ENCODE measurements at regions of chr3 and their contacts with region 1.

Region 1: GRCh38 chr3:105774444-105775180 is 94.2 kb downstream of the CBLB start:
- DNase-seq: no peak
- ATAC-seq: no peak
- H3K4me3 ChIP-seq: no peak overlapping the region
- H3K4me3 Mint-ChIP-seq: no peak overlapping the region
- H3K27ac ChIP-seq: peak overlapping the region in 1 of 2 experiments; percentile 22
- H3K27ac Mint-ChIP-seq: peak overlapping the region; percentile 70
- H3K4me1 ChIP-seq: peaks cover 41% of the 10 kb centered on the region
- H3K4me1 Mint-ChIP-seq: peaks cover 83% of the 10 kb centered on the region
- H3K27me3 ChIP-seq: no peaks in the 10 kb centered on the region
- H3K27me3 Mint-ChIP-seq: no peaks in the 10 kb centered on the region
- CTCF ChIP-seq: no peak

Region 2: GRCh38 chr3:105394177-105394576 is 380.4 kb before region 1 on chr3:
- CTCF ChIA-PET with region 1: no interaction called
- POLR2A ChIA-PET with region 1: no interaction called
- intact Hi-C with region 1: no loop called
- DNase-seq: no peak
- ATAC-seq: no peak
- H3K4me3 ChIP-seq: no peak overlapping the region
- H3K4me3 Mint-ChIP-seq: no peak overlapping the region
- H3K27ac ChIP-seq: no peak overlapping the region
- H3K27ac Mint-ChIP-seq: no peak overlapping the region
- H3K4me1 ChIP-seq: no peaks in the 10 kb centered on the region
- H3K4me1 Mint-ChIP-seq: no peaks in the 10 kb centered on the region
- H3K27me3 ChIP-seq: no peaks in the 10 kb centered on the region
- H3K27me3 Mint-ChIP-seq: peaks cover 3% of the 10 kb centered on the region
- CTCF ChIP-seq: no peak

Region 3: DNA sequence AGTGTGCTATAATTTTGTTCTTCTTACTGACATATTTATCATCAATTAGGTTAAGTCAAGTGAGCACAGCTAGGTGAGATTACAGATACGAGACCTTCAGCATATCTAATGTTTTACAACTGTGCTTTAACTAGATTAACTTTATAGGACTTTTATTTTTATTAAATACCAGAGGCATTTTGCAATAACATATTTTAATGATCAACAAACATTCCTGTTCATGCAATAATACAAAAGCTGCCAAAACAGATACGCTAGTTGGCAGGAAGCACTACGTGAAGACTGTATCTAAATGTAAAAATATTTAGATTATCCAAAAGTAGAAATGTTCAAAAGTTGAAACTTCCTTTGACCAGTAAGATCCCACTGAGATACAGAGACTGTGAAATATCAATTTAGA is 44.9 kb before region 1 on chr3:
- CTCF ChIA-PET with region 1: no interaction called
- POLR2A ChIA-PET with region 1: no interaction called
- intact Hi-C with region 1: loop called (anchors 5 kb)
- DNase-seq: no peak
- ATAC-seq: no peak
- H3K4me3 ChIP-seq: no peak overlapping the region
- H3K4me3 Mint-ChIP-seq: no peak overlapping the region
- H3K27ac ChIP-seq: no peak overlapping the region
- H3K27ac Mint-ChIP-seq: no peak overlapping the region
- H3K4me1 ChIP-seq: no peaks in the 10 kb centered on the region
- H3K4me1 Mint-ChIP-seq: peaks cover 26% of the 10 kb centered on the region
- H3K27me3 ChIP-seq: no peaks in the 10 kb centered on the region
- H3K27me3 Mint-ChIP-seq: no peaks in the 10 kb centered on the region
- CTCF ChIP-seq: no peak

Region 4: DNA sequence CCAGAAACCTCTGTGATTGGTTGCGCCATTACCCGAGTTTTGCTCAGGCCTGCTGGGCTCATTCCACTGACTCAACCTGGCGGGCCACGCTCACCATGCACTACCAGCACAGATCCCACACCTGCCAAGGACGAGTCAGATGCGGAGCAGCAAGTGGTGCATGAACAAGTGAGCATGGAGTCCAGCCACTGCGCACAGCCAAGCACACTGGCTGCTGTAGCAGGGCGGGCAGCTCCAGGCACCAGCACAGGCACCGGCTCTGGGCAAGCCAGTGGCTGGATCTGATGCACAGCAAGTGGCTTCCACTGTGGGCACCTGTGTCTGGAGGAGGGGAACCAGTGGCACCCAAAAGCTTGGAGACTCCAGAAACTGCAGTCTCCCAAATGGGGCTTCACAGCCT is 16.1 kb before region 1 on chr3:
- CTCF ChIA-PET with region 1: interaction called, 7 read pairs
- POLR2A ChIA-PET with region 1: interaction called, 6 read pairs
- intact Hi-C with region 1: loop called (anchors 2 kb)
- DNase-seq: no peak
- ATAC-seq: no peak
- H3K4me3 ChIP-seq: no peak overlapping the region
- H3K4me3 Mint-ChIP-seq: no peak overlapping the region
- H3K27ac ChIP-seq: peak overlapping the region in 1 of 2 experiments; percentile 85
- H3K27ac Mint-ChIP-seq: peak overlapping the region; percentile 79
- H3K4me1 ChIP-seq: peaks cover 42% of the 10 kb centered on the region
- H3K4me1 Mint-ChIP-seq: peaks cover 72% of the 10 kb centered on the region
- H3K27me3 ChIP-seq: no peaks in the 10 kb centered on the region
- H3K27me3 Mint-ChIP-seq: no peaks in the 10 kb centered on the region
- CTCF ChIP-seq: no peak

Region 5: DNA sequence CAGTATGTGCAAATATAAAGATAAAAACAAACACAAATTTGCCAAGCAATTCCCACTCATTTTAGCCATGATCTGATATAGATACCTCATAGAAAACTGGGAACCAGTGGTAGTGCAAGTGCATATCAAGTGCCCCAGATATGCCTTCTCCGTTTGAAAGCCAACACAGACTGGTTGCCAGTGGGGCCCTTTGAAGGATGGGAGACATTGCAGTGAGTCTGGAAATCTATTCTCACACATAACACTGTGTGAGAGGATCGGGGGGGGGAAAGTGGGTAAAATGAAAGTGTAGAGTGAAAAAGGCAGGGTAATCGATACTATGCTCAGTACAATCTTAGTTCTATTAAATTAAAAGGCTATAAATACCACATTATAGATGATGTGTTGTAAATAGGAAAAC is 11.2 kb after region 1 on chr3:
- CTCF ChIA-PET with region 1: no interaction called
- POLR2A ChIA-PET with region 1: no interaction called
- intact Hi-C with region 1: loop called in 1 of 2 experiments (anchors 1 kb)
- DNase-seq: peak in 1 of 9 experiments; percentile 58
- ATAC-seq: peak; percentile 29
- H3K4me3 ChIP-seq: peak overlapping the region in 1 of 2 experiments; percentile 26
- H3K4me3 Mint-ChIP-seq: no peak overlapping the region
- H3K27ac ChIP-seq: peak overlapping the region in 1 of 2 experiments; percentile 44
- H3K27ac Mint-ChIP-seq: peak overlapping the region; percentile 7
- H3K4me1 ChIP-seq: peaks cover 47% of the 10 kb centered on the region
- H3K4me1 Mint-ChIP-seq: peaks cover 68% of the 10 kb centered on the region
- H3K27me3 ChIP-seq: no peaks in the 10 kb centered on the region
- H3K27me3 Mint-ChIP-seq: no peaks in the 10 kb centered on the region
- CTCF ChIP-seq: no peak

Region 6: GRCh38 chr3:106086636-106087035 is 312.0 kb after region 1 on chr3:
- CTCF ChIA-PET with region 1: no interaction called
- POLR2A ChIA-PET with region 1: no interaction called
- intact Hi-C with region 1: no loop called
- DNase-seq: no peak
- ATAC-seq: no peak
- H3K4me3 ChIP-seq: no peak overlapping the region
- H3K4me3 Mint-ChIP-seq: no peak overlapping the region
- H3K27ac ChIP-seq: no peak overlapping the region
- H3K27ac Mint-ChIP-seq: no peak overlapping the region
- H3K4me1 ChIP-seq: no peaks in the 10 kb centered on the region
- H3K4me1 Mint-ChIP-seq: peaks cover 6% of the 10 kb centered on the region
- H3K27me3 ChIP-seq: no peaks in the 10 kb centered on the region
- H3K27me3 Mint-ChIP-seq: no peaks in the 10 kb centered on the region
- CTCF ChIP-seq: no peak

Measured in CD8-positive, alpha-beta T cell (primary cell).